ENCODE measurements at regions of chr10 and their contacts with region 1.

Region 1: GRCh38 chr10:33164060-33164709 is 170.3 kb downstream of the NRP1 start:
- DNase-seq: peak; percentile 94
- ATAC-seq: peak; percentile 88
- H3K4me3 ChIP-seq: peak overlapping the region; percentile 0; the same call in 1 of the 2 replicates
- H3K27ac ChIP-seq: peak overlapping the region; percentile 44
- H3K4me1 ChIP-seq: peaks cover 19% of the 10 kb centered on the region
- H3K27me3 ChIP-seq: no peaks in the 10 kb centered on the region
- CTCF ChIP-seq: no peak

Region 2: DNA sequence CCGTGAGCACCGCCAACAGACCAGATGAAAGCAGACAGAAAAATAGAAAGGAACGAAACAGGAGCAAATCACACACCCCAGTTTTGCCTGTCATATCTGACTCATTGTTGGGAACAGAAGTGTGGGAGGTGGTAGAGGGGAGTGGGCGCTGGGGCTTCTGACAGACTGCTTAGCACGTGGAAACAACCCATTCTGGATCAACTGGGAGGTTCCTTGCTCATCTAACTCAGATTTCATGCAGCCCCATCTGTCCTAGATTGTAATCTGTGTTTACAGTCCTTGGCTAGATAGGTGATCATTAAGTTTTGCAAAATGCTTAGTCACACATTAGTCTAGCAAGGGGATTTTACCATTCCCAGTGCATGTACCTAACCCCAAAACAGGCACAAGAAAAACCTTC is 16.2 kb after region 1 on chr10:
- CTCF ChIA-PET with region 1: no interaction called
- POLR2A ChIA-PET with region 1: no interaction called
- intact Hi-C with region 1: loop called (anchors 1 kb)
- DNase-seq: peak; percentile 82
- ATAC-seq: peak; percentile 8
- H3K4me3 ChIP-seq: no peak overlapping the region
- H3K27ac ChIP-seq: peak overlapping the region; percentile 9
- H3K4me1 ChIP-seq: peaks cover 36% of the 10 kb centered on the region
- H3K27me3 ChIP-seq: no peaks in the 10 kb centered on the region
- CTCF ChIP-seq: no peak

Measured in PC-3 (cell line).